Activated naive CD4-positive, alpha-beta T cell treated with anti-CD3 and anti-CD28 coated beads for 36 hours (primary cell): ENCODE measurements at regions of chr11 and their contacts with region 1.

Region 1: GRCh38 chr11:32615422-32615821 is 31.8 kb downstream of the EIF3M start:
- DNase-seq: no peak
- H3K4me3 Mint-ChIP-seq: no peak overlapping the region
- H3K27ac Mint-ChIP-seq: no peak overlapping the region
- H3K4me1 Mint-ChIP-seq: no peaks in the 10 kb centered on the region
- H3K27me3 Mint-ChIP-seq: peaks cover 4% of the 10 kb centered on the region

Region 2: GRCh38 chr11:32231905-32232493 is 383.4 kb before region 1 on chr11:
- CTCF ChIA-PET with region 1: no interaction called
- intact Hi-C with region 1: no loop called
- DNase-seq: peak; percentile 37
- H3K4me3 Mint-ChIP-seq: no peak overlapping the region
- H3K27ac Mint-ChIP-seq: no peak overlapping the region
- H3K4me1 Mint-ChIP-seq: no peaks in the 10 kb centered on the region
- H3K27me3 Mint-ChIP-seq: peaks cover 10% of the 10 kb centered on the region

Region 3: DNA sequence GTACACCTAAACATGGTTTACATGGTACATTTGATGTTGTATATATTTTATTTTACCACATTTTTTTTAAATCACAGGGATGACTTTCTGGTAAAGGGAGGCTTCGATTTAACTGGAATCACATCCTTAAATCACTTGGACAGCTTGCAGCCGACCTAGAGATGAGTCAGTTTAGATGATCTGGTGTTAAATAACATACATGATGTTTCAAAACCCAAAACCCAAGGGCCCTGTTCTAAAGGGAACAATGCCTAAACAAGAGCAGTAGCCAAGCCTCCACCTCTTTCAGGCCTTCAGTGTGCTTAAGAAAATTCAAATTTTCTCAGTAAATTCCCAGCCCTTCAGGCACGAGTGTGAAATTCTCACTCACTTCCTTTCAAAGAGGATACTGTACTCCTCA is 288.9 kb before region 1 on chr11:
- CTCF ChIA-PET with region 1: interaction called, 3 read pairs
- intact Hi-C with region 1: loop called (anchors 1 kb)
- DNase-seq: no peak
- H3K4me3 Mint-ChIP-seq: no peak overlapping the region
- H3K27ac Mint-ChIP-seq: no peak overlapping the region
- H3K4me1 Mint-ChIP-seq: no peaks in the 10 kb centered on the region
- H3K27me3 Mint-ChIP-seq: peaks cover 17% of the 10 kb centered on the region

Region 4: GRCh38 chr11:32939046-32939445 is 323.6 kb after region 1 on chr11:
- CTCF ChIA-PET with region 1: no interaction called
- intact Hi-C with region 1: no loop called
- DNase-seq: no peak
- H3K4me3 Mint-ChIP-seq: no peak overlapping the region
- H3K27ac Mint-ChIP-seq: no peak overlapping the region
- H3K4me1 Mint-ChIP-seq: peaks cover 16% of the 10 kb centered on the region
- H3K27me3 Mint-ChIP-seq: no peaks in the 10 kb centered on the region